Activated CD4-positive, alpha-beta T cell treated with anti-CD3 and anti-CD28 coated beads for 36 hours (primary cell): ENCODE measurements at regions of chrX and their contacts with region 1.

Region 1: GRCh38 chrX:1453951-1454785 is 1.5 kb upstream of the ASMTL start:
- DNase-seq: peak; percentile 96
- ATAC-seq: peak; percentile 57
- H3K4me3 Mint-ChIP-seq: peak overlapping the region; percentile 53
- H3K27ac Mint-ChIP-seq: peak overlapping the region; percentile 47
- H3K4me1 Mint-ChIP-seq: peaks cover 8% of the 10 kb centered on the region
- H3K27me3 Mint-ChIP-seq: no peaks in the 10 kb centered on the region

Region 2: GRCh38 chrX:1205680-1206611 is 248.2 kb before region 1 on chrX:
- CTCF ChIA-PET with region 1: no interaction called
- POLR2A ChIA-PET with region 1: no interaction called
- intact Hi-C with region 1: loop called in 1 of 2 experiments (anchors 2 kb)
- DNase-seq: peak; percentile 46
- ATAC-seq: peak; percentile 53
- H3K4me3 Mint-ChIP-seq: peak overlapping the region; percentile 67
- H3K27ac Mint-ChIP-seq: peak overlapping the region; percentile 42
- H3K4me1 Mint-ChIP-seq: peaks cover 29% of the 10 kb centered on the region
- H3K27me3 Mint-ChIP-seq: peaks cover 4% of the 10 kb centered on the region

Region 3: DNA sequence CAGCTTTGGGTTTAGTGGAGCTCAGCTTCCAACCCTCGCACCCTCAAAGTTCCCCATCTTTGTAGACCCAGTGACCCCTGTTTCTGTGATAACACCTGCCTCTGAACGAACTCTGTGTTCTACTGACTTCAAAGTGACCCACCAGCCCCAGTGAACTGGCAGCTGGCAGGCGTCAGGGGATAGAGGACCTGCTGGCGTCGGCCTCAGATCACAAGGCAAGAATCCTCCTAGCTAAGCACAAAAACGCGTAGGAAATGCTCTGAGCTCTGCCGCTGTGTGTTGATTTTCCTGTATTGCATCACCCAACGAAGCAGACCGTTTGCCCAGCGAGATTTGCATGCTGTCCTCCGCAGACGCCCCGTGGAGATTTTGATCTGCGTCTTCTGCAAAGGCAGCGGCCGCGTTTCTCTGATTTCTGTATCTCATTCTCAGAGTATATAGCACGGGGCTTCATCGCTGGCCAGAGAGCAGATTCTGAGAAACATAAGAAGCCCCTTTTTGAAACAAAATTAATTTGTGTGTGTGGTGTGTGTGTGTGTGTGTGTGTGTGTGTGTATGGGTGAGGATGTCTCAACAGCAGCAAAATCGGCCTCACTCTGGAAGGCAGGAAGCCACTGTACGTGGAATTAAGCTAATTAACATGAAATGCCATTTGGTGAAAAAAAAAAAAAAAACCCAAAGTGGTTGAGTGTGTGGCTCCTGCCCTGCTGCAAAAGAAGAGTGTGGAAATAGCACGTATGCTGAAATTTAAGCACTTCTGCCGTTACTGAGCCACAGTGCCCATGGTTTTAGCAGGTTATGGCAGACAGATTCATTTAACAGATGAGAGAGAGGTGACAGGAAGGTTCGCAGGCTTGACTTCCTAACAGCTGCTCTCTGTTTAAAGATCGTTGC is 27.7 kb after region 1 on chrX:
- CTCF ChIA-PET with region 1: no interaction called
- POLR2A ChIA-PET with region 1: no interaction called
- intact Hi-C with region 1: loop called in 1 of 2 experiments (anchors 2 kb)
- DNase-seq: peak; percentile 87
- ATAC-seq: peak; percentile 73
- H3K4me3 Mint-ChIP-seq: peak overlapping the region; percentile 82
- H3K27ac Mint-ChIP-seq: peak overlapping the region; percentile 99
- H3K4me1 Mint-ChIP-seq: peaks cover 65% of the 10 kb centered on the region
- H3K27me3 Mint-ChIP-seq: no peaks in the 10 kb centered on the region

Region 4: GRCh38 chrX:1537035-1537715 is 83.0 kb after region 1 on chrX and contains the start of gene P2RY8:
- CTCF ChIA-PET with region 1: no interaction called
- POLR2A ChIA-PET with region 1: no interaction called
- intact Hi-C with region 1: loop called (anchors 1 kb)
- DNase-seq: peak; percentile 89
- ATAC-seq: peak; percentile 75
- H3K4me3 Mint-ChIP-seq: peak within 1 kb of the TSS; percentile 87
- H3K27ac Mint-ChIP-seq: peak within 1 kb of the TSS; percentile 93
- H3K4me1 Mint-ChIP-seq: peaks cover 15% of the 10 kb centered on the region
- H3K27me3 Mint-ChIP-seq: no peaks in the 10 kb centered on the region
- total RNA-seq, gene P2RY8: 19.8 to 21.2 TPM

Region 5: DNA sequence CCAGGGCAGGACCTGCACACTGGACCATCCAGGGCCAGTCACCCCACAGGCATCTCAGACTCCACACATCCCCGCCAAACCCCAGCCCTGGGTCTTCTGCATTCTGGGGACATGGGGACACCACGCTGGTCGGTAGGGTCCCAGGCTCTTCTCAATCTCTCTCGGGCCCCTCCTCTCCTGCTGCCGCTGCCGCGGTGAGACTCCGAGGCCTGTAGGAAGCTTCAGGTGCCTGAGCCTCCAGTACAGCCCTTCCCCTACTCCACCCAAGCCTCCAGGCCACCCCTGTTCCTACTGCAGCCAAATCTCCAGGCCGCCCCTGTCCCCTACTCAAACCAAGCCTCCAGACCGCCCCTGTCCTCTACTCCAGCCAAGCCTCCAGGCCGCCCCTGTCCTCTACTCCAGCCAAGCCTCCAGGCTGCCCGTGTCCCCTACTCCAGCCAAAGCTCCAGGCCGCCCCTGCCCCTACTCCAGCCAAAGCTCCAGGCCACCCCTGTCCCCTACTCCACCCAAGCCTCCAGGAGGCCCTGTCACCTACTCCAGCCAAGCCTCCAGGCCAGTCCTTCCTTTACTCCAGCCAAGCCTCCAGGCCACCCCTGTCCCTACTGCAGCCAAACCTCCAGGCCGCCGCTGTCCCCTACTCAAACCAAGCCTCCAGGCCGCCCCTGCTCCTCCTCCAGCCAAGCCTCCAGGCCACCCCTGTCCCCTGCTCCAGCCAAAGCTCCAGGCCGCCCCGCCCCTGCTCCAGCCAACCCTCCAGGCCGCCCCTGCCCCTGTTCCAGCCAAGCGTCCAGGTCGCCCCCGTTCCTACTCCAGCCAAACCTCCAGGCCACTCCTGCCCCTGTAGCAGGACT is 155.4 kb after region 1 on chrX:
- CTCF ChIA-PET with region 1: no interaction called
- POLR2A ChIA-PET with region 1: no interaction called
- intact Hi-C with region 1: no loop called
- DNase-seq: no peak
- ATAC-seq: no peak
- H3K4me3 Mint-ChIP-seq: no peak overlapping the region
- H3K27ac Mint-ChIP-seq: no peak overlapping the region
- H3K4me1 Mint-ChIP-seq: no peaks in the 10 kb centered on the region
- H3K27me3 Mint-ChIP-seq: no peaks in the 10 kb centered on the region

Region 6: DNA sequence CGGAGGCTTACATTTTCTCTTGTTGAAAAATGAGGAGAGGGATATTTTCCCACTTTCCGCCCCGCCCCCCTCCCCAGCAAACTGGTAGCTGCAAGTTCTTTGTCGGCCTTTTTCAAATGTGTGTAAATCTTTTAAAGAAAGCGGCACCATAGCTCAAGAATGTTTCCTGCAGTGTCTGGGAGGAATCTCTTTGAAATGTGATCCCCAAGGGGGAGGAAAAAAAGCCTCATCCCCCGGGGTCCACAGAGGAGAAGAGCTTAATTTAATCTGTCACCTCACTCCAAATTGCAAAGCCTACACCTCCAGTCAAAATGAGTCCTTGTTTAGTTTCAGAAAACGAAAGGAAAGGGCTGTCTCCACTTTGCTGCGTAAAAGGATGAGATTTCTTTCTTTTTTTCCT is 195.5 kb after region 1 on chrX:
- CTCF ChIA-PET with region 1: no interaction called
- POLR2A ChIA-PET with region 1: no interaction called
- intact Hi-C with region 1: loop called in 1 of 2 experiments (anchors 2 kb)
- DNase-seq: no peak
- ATAC-seq: no peak
- H3K4me3 Mint-ChIP-seq: no peak overlapping the region
- H3K27ac Mint-ChIP-seq: no peak overlapping the region
- H3K4me1 Mint-ChIP-seq: no peaks in the 10 kb centered on the region
- H3K27me3 Mint-ChIP-seq: no peaks in the 10 kb centered on the region

Region 7: DNA sequence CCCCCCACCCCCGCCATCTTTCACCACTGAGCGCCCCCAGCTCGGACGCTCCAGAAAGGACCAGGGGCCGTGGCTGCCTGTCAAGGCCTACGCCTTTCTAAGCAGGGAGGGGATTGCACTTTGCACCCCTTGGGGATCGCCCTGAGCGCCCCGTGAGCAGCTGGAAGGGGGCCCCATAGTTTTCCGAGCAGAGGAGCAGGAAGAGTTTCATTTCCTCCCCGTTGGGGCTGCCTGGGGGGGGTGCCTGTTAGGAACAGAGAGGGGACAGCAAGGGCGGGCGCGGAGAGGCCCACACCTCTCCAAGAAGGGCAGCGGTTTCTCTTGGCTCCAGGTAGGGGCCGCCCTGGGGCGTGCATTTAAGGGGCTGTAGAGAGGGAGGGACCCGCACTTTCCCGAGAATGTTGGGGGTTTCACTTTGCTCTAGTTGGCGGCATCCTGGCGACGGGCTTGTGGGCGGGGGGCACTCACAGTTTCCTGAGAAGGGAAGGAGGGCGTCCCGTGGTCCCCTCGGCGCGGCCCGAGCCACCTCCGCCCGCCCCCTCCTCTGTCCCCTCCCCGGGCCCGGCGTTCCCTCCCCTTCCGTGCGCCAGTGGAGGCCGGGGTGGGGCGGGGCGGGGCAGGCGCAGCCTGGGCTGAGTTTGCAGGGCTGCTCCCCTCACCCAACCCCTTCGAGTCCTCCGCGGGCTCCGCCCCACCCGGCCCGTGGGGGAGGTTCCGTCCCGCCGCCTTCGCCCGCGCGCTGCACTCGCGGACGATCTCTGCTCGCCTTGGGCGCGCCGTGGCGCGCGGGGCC is 1154.7 kb after region 1 on chrX:
- CTCF ChIA-PET with region 1: no interaction called
- POLR2A ChIA-PET with region 1: no interaction called
- intact Hi-C with region 1: loop called in 1 of 2 experiments (anchors 1 kb)
- DNase-seq: peak; percentile 93
- ATAC-seq: peak; percentile 94
- H3K4me3 Mint-ChIP-seq: peak overlapping the region; percentile 83
- H3K27ac Mint-ChIP-seq: peak overlapping the region; percentile 82
- H3K4me1 Mint-ChIP-seq: peaks cover 47% of the 10 kb centered on the region
- H3K27me3 Mint-ChIP-seq: no peaks in the 10 kb centered on the region